ENCODE measurements at regions of chr17 and their contacts with region 1.

Region 1: DNA sequence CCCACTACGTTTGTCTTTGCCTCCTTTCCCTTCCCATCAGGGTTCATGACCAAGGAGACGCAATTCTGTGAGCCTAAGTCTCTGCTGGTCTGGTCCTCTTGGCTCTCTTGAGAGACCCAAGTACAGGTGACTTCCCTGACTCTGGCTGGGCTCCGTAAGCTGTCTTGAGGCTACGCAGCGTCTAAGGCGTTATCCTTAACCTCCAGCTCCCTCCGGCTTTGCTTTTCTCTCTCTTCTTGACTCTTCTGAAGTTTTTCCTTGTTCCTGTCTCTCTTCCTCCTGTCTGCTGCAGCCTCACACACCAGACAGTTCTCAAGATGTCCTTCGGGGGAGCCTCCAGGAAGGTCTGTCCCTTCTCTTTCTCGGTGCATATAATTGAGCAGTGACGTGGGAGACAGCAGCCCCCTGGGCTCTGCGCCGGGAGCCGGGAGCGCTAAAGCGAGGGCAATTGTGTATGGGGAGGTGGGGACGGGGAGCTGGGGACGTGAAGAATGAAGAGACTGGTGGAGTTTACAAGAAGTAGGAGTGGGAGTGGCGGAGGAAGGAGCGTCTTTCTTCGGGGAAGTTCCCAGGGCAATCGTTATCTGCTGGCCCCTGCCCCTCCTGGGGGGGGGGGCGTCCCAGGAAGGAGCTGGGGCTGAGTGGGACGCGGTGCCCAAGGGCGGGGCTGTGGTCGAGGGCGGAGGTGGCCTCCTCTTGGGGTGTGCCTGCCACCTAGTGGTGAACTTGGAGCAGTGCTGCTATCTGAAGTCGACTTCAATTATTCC is 6.9 kb upstream of the PIRT start:
- DNase-seq: peak; percentile 73
- H3K4me3 Mint-ChIP-seq: peak overlapping the region; percentile 55
- H3K27ac Mint-ChIP-seq: no peak overlapping the region
- H3K4me1 Mint-ChIP-seq: peaks cover 7% of the 10 kb centered on the region
- H3K27me3 Mint-ChIP-seq: peaks cover 7% of the 10 kb centered on the region

Region 2: GRCh38 chr17:10631048-10631700 is 213.6 kb before region 1 on chr17:
- CTCF ChIA-PET with region 1: interaction called, 16 read pairs
- POLR2A ChIA-PET with region 1: no interaction called
- DNase-seq: peak; percentile 24
- H3K4me3 Mint-ChIP-seq: no peak overlapping the region
- H3K27ac Mint-ChIP-seq: no peak overlapping the region
- H3K4me1 Mint-ChIP-seq: peaks cover 8% of the 10 kb centered on the region
- H3K27me3 Mint-ChIP-seq: no peaks in the 10 kb centered on the region

Region 3: GRCh38 chr17:10737168-10737622 is 107.6 kb before region 1 on chr17:
- CTCF ChIA-PET with region 1: interaction called, 20 read pairs
- POLR2A ChIA-PET with region 1: no interaction called
- DNase-seq: peak; percentile 30
- H3K4me3 Mint-ChIP-seq: no peak overlapping the region
- H3K27ac Mint-ChIP-seq: no peak overlapping the region
- H3K4me1 Mint-ChIP-seq: peaks cover 5% of the 10 kb centered on the region
- H3K27me3 Mint-ChIP-seq: peaks cover 2% of the 10 kb centered on the region

Region 4: DNA sequence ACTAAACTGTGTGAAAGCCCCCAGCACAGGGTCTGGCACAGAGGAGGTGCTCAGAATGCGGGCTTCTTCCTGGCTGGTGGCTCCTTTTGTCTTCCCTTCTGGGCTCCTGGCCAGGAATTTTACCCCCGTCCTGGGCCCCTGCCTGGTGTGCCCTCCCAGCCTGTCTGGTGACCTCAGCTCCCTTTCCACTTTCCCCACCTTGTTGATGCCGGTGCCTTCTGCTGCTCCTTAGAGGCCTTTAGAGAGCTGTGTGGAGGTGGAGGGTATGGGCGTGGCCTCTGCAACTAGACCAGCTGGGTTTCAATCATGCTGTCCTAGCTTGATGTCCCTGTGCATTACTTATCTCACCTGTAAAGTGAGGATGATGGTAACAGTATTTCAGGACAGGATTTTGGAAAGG is 23.7 kb before region 1 on chr17:
- CTCF ChIA-PET with region 1: no interaction called
- POLR2A ChIA-PET with region 1: no interaction called
- DNase-seq: no peak
- H3K4me3 Mint-ChIP-seq: no peak overlapping the region
- H3K27ac Mint-ChIP-seq: no peak overlapping the region
- H3K4me1 Mint-ChIP-seq: no peaks in the 10 kb centered on the region
- H3K27me3 Mint-ChIP-seq: peaks cover 2% of the 10 kb centered on the region

Region 5: DNA sequence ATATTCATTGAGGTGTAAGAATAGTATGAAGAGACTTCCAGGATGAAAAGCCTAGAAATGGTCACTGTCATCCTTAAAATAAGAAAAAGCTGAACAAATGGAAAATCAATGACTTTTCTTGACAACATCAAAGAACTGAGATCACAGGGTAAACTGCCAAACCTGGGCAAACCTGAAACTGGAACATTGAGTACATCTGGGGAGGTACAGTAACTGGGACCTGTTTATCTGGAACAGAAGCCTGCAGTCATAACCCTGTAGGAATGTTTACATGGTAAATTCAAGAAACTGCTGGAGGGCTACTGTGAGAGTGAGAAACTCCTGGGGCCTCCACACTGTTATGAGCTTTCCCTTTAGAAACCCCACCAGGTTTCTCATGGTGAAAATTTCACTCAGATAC is 123.2 kb after region 1 on chr17:
- CTCF ChIA-PET with region 1: no interaction called
- POLR2A ChIA-PET with region 1: no interaction called
- DNase-seq: no peak
- H3K4me3 Mint-ChIP-seq: no peak overlapping the region
- H3K27ac Mint-ChIP-seq: no peak overlapping the region
- H3K4me1 Mint-ChIP-seq: no peaks in the 10 kb centered on the region
- H3K27me3 Mint-ChIP-seq: no peaks in the 10 kb centered on the region